PC-9 (cell line): ENCODE measurements at regions of chr5 and their contacts with region 1.

Region 1: DNA sequence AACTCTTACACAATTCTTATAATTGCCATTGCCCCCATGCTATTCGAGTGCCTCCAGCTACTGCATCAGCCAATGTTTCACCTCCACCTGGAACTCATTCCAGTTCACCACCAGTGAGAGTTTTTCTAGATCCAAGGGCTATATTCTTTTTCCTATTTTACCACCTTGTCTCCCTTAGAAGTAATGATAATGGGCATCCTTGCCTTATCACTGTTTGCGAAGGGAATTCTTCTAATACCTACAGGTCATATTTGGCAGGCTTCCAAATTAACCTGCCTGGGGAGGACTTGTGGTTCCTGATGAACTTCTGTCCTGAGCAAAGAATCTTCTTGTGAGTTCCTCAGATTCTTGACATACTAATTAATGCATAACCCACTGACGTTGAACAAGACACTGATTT is 8.3 kb upstream of the CLK4 start:
- DNase-seq: peak; percentile 71 to 99
- H3K4me3 ChIP-seq: no peak overlapping the region
- H3K27ac ChIP-seq: peak overlapping the region; percentile 49
- H3K4me1 ChIP-seq: peaks cover 37% of the 10 kb centered on the region
- H3K27me3 ChIP-seq: no peaks in the 10 kb centered on the region
- CTCF ChIP-seq: no peak

Region 2: GRCh38 chr5:178786859-178787760 is 152.0 kb after region 1 on chr5:
- CTCF ChIA-PET with region 1: no interaction called
- POLR2A ChIA-PET with region 1: interaction called, 7 read pairs
- intact Hi-C with region 1: loop called (anchors 2 kb)
- DNase-seq: peak; percentile 68 to 95
- H3K4me3 ChIP-seq: no peak overlapping the region; the same call in 1 of the 2 replicates
- H3K27ac ChIP-seq: peak overlapping the region; percentile 23; the same call in 1 of the 2 replicates
- H3K4me1 ChIP-seq: peaks cover 23% of the 10 kb centered on the region
- H3K27me3 ChIP-seq: no peaks in the 10 kb centered on the region
- CTCF ChIP-seq: no peak; the same call in 1 of the 2 replicates